T-cell (primary cell): ENCODE measurements at regions of chr17 and their contacts with region 1.

Region 1: GRCh38 chr17:27892866-27893769 is at the start of gene LYRM9:
- DNase-seq: peak; percentile 76 to 97 (median 89)
- ATAC-seq: peak; percentile 95 to 99 (median 96)
- H3K4me3 ChIP-seq: peak within 1 kb of the TSS; percentile 62 to 77
- H3K4me3 Mint-ChIP-seq: peak within 1 kb of the TSS; percentile 79 to 86 (median 80)
- H3K27ac ChIP-seq: peak within 1 kb of the TSS; percentile 37
- H3K27ac Mint-ChIP-seq: peak within 1 kb of the TSS; percentile 78 to 81
- H3K4me1 ChIP-seq: peaks cover 2 to 12% of the 10 kb centered on the region in 2 experiments
- H3K4me1 Mint-ChIP-seq: peaks cover 17 to 28% (median 22%) of the 10 kb centered on the region in 3 donors
- H3K27me3 ChIP-seq: peaks cover 0 to 6% of the 10 kb centered on the region in 2 experiments
- H3K27me3 Mint-ChIP-seq: peaks cover 8 to 26% of the 10 kb centered on the region in 2 donors
- total RNA-seq, gene LYRM9: 11.7 to 19.2 (median 14.2) TPM

Region 2: DNA sequence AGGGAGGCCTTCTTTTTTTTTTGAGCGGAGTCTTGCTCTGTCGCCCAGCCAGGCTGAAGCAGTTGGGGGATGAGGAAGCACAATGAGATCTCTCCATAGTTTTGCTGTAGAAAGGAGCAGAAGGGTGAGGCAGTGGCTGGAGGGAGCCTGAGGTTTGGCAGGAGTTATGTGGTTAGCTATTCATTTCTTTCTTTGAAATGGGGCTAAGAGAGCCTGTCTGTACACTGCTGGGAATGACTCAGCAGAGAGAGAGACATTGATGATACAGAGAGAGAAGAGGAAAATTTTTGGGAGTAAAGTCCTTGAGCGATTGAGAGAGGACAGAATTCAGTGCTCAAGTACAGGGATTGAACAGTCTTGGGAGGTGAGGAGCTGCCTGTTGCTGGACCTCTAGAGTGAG is 114.9 kb before region 1 on chr17:
- CTCF ChIA-PET with region 1: no interaction called
- POLR2A ChIA-PET with region 1: interaction called in 1 of 2 experiments, 12 read pairs
- DNase-seq: no peak
- ATAC-seq: no peak
- H3K4me3 ChIP-seq: no peak overlapping the region
- H3K4me3 Mint-ChIP-seq: no peak overlapping the region
- H3K27ac ChIP-seq: no peak overlapping the region
- H3K27ac Mint-ChIP-seq: no peak overlapping the region
- H3K4me1 ChIP-seq: no peaks in the 10 kb centered on the region
- H3K4me1 Mint-ChIP-seq: no peaks in the 10 kb centered on the region
- H3K27me3 ChIP-seq: peaks cover 0 to 7% of the 10 kb centered on the region in 2 experiments
- H3K27me3 Mint-ChIP-seq: peaks cover 0 to 6% of the 10 kb centered on the region in 2 donors

Region 3: GRCh38 chr17:27834571-27834970 is 58.5 kb before region 1 on chr17:
- CTCF ChIA-PET with region 1: no interaction called
- POLR2A ChIA-PET with region 1: no interaction called
- DNase-seq: no peak
- ATAC-seq: no peak
- H3K4me3 ChIP-seq: no peak overlapping the region
- H3K4me3 Mint-ChIP-seq: no peak overlapping the region
- H3K27ac ChIP-seq: no peak overlapping the region
- H3K27ac Mint-ChIP-seq: no peak overlapping the region
- H3K4me1 ChIP-seq: no peaks in the 10 kb centered on the region
- H3K4me1 Mint-ChIP-seq: no peaks in the 10 kb centered on the region
- H3K27me3 ChIP-seq: no peaks in the 10 kb centered on the region
- H3K27me3 Mint-ChIP-seq: no peaks in the 10 kb centered on the region